GM10248 (cell line): ENCODE measurements at regions of chr6 and their contacts with region 1.

Region 1: DNA sequence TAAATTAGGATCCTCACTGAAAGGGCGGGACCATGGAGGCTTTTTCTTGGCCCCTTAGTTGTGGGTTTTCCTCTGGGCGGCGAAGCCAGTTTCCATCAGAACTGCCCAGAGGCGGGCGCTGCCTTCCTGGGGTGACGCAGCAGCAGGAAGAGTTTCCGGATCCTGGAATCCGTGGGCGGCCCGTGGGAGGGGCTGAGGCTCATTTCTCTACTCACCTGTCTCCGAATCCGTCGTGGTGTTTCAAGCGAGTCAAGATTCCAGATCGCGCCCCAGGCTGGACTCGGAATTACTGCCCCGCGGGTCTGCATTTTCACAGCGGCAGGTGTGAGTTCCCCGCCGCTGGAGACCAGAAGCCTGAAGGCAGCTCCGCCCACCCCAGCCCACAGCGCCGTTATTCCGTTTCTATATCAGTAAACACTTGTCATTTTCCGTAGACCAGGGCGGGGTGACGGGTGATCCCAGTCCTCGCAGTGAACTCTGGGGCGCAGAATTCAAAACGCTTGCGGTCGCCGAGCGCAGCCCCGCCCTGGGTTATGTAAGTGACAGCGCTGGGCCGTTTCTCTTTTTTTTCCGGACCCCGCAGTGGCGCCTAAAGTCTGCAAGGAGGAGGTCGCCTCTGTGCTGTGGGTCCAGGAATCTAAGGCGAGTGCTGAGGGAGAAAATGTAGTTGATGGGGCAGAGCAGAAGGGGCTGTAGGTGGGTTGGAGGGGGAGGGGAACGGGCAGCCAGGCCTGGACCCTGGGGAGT is 27.2 kb upstream of the POU5F1 start:
- DNase-seq: peak; percentile 76
- CTCF ChIP-seq: no peak

Region 2: DNA sequence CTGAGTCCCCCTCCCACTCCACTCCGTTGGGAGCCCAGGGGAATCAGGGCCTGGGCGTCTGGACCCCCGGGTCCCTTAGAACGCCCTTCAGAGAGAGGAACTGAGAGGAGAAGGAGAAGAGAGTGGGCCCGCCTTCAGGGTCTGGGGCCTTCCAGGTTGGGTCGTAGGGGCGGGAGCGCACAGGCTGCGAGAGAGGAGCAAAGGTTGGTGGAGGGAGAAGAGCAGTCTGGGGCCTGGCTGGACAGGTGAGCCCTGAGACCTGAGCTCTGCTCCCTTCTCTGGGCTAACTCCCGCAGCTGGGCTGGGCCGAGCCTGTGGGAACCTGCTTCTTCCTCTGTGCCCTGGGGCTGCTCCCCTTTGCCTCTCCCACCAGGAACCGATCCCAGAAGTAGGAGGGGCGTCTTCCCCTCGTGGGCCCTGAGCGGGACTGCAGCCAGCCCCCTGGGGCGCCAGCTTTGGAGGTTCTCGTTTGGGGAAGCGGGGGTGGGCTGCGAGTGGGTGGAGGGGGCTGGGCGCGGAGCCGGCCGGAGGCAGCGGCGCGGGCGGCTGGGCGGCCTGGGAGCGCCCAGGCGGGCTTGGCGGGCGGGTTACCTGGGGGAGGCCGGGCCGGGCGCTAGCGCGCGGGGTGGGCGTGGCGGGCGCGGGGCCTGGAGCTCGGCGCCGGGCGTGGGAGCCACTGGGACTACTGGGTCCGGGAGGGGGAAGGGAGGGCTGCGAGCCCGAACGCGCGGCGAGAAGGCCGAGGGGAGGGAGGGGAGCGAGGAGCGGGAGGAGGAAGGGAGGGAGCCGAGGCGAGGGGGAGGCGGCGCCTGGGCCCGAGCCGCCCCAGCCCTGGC is 313.8 kb before region 1 on chr6 and contains the start of gene DDR1:
- CTCF ChIA-PET with region 1: no interaction called
- POLR2A ChIA-PET with region 1: no interaction called
- DNase-seq: peak; percentile 84
- CTCF ChIP-seq: no peak

Region 3: DNA sequence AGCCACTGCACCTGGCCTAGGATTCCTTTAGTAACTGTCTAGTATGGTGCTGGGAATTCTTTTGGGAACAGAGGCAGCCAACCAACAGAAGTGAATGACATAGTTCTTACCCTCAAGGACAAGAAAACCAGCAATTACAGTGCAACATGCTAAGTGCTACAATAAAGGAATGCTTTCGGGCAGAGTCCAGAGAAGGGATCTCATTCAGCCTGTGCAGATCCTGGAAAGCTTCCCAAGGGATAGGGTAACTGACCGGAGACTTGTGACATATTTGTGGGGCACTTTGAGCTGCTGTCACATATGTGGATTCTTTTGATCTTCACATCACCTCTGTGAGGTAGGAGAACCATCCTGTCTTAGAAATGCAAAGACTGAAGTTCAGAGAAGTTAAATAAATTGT is 132.2 kb before region 1 on chr6:
- CTCF ChIA-PET with region 1: no interaction called
- POLR2A ChIA-PET with region 1: no interaction called
- DNase-seq: no peak
- CTCF ChIP-seq: no peak

Region 4: DNA sequence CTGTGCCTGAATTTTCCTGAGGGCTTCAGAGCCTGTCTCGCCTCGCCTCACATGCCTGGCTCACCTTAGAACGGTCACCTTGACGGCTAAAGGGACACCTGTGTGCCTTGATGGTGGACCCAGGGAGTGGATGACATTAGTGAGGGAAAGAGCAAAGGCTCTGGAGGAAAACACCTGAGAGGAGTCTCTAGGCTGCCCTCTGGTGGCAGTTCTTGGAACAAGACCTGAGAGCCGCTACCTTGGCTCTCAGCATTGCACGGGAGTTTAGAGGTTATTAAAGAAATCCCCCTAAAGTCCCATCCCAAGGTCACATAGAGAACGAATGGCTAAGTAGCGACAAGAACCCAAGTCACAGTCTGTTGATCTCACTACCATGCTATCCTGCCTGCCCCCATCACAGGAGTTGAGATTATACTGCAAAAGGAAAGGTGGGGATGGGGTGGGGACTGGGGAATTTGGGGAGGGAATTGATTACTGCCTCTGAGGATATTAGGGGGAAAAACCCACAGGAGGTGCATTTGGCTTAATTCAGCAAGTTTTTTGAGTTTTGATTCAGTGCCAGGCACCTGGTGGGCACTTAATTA is 69.5 kb before region 1 on chr6:
- CTCF ChIA-PET with region 1: interaction called, 256 read pairs
- POLR2A ChIA-PET with region 1: no interaction called
- DNase-seq: peak; percentile 81
- CTCF ChIP-seq: peak; percentile 76

Region 5: GRCh38 chr6:31143148-31143547 is 54.6 kb before region 1 on chr6:
- CTCF ChIA-PET with region 1: interaction called, 256 read pairs
- POLR2A ChIA-PET with region 1: no interaction called
- DNase-seq: no peak
- CTCF ChIP-seq: no peak

Region 6: DNA sequence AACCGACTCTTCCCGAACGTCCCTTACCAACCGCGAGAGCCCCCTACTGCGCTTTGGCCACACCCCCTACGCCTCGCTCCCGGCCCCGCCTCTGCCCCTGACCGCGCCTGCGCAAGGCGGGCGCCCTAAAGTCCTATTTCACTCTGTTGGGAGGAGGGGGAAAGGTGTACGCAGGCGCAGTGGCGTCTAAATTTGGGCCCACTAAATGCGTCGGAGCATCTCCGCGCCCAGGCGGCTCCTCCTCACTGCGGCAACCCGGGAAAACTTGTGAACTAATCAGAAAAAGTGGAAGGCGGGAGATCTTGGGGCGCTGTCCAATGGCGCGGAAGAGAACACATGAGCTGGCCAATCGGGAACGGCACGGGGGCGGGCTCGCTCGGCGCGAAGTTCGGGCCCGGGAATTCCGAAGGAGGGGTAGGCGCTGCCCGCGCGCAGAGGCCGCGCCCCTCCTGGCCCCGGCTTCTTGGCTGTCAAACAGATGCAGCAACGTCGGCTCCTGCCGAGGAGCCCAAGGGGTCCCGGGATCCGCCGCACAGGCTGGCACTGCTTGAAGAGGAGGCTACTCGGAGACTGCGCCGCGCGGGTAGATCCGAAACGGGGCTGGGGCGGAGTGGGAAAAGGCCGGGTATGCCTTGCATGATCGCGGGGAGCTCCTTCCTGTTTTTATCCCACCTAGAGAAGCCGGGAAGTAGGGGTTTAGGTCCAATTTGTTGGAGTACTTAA is 39.4 kb before region 1 on chr6 and contains the start of gene TCF19:
- CTCF ChIA-PET with region 1: interaction called, 15 read pairs
- POLR2A ChIA-PET with region 1: interaction called, 3 read pairs
- DNase-seq: peak; percentile 100
- CTCF ChIP-seq: no peak

Region 7: DNA sequence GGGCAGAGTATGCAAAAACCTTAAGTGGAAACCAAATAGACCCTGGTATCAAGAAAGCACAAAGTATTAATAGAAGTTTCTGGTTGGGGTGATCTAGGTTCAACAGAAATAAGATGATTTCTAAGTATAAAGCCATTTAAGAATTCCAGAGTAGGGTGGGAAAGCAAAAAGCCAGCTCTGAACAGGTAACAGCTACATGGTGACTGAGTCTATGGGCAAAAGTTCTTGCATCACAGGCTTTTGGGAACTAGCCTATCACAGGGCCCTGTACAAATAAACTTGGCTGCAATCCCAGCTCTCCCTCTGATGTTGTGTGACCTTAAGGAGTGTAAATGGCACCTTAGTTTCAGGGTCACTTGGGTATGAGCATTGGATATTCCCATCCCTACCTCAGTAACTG is 33.8 kb before region 1 on chr6:
- CTCF ChIA-PET with region 1: interaction called, 15 read pairs
- POLR2A ChIA-PET with region 1: interaction called, 4 read pairs
- DNase-seq: no peak
- CTCF ChIP-seq: no peak

Region 8: GRCh38 chr6:31180502-31180901 is 17.2 kb before region 1 on chr6:
- CTCF ChIA-PET with region 1: interaction called, 33 read pairs
- POLR2A ChIA-PET with region 1: no interaction called
- DNase-seq: peak; percentile 67
- CTCF ChIP-seq: no peak

Region 9: GRCh38 chr6:31225735-31226134 is 28.0 kb after region 1 on chr6:
- CTCF ChIA-PET with region 1: no interaction called
- POLR2A ChIA-PET with region 1: no interaction called
- DNase-seq: no peak
- CTCF ChIP-seq: no peak

Region 10: DNA sequence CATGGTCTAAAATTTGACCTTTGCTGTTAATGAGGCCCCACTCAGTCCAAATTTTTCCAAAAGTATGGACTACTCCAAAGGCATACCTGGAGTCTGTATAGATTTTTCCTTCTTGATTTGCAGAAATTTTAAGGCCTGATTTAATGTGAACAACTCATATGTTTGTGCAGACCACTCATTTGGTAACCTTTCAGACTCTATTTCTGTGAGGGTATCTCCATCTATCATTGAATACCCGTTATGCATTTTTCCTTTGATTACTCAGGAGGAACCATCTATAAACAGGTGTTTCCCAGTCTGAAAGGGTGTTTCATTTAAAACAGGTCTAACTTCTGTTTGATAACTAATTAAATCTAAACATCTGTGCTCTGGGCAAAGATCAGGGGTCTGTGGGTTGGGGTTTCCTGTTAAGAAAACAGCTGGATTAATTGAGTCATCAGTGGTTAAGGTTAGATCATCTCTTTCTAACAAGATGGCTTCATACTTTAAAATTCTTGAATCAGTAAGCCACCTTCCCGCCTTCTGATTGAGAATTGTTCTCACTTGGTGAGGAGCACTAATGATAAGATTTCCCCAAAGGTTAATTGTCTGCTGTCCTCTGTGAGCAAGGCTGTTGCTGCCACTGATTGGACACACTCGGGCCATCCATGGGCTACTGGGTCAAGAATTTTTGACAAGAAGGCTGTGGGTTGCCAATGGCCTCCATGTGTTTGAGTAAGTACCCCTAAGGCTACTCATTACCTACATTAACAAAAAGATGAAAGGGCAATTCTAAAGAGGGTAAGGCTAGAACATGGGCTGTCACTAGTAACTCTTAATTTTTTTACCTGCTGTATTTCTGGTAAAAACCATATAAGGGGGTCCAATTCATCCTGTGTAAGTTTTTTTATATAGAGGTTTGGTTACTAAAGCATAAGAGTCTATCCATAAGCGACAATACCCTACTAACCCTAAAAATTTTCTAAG is 135.2 kb after region 1 on chr6:
- CTCF ChIA-PET with region 1: no interaction called
- POLR2A ChIA-PET with region 1: no interaction called
- DNase-seq: no peak
- CTCF ChIP-seq: no peak